Naive thymus-derived CD4-positive, alpha-beta T cell (primary cell): ENCODE measurements at regions of chr5 and their contacts with region 1.

Region 1: GRCh38 chr5:127492854-127493738 is 24.3 kb upstream of the PRRC1 start:
- DNase-seq: peak in 6 of 9 donors; percentile 24 to 63 (median 48)
- ATAC-seq: peak; percentile 71
- H3K4me3 ChIP-seq: no peak overlapping the region
- H3K4me3 Mint-ChIP-seq: no peak overlapping the region
- H3K27ac ChIP-seq: no peak overlapping the region
- H3K27ac Mint-ChIP-seq: no peak overlapping the region
- H3K4me1 ChIP-seq: no peaks in the 10 kb centered on the region
- H3K4me1 Mint-ChIP-seq: peaks cover 0 to 3% (median 0%) of the 10 kb centered on the region in 7 donors
- H3K27me3 ChIP-seq: no peaks in the 10 kb centered on the region
- H3K27me3 Mint-ChIP-seq: peaks cover 13 to 55% (median 29%) of the 10 kb centered on the region in 5 donors

Region 2: GRCh38 chr5:126339215-126339805 is 1153.8 kb before region 1 on chr5:
- CTCF ChIA-PET with region 1: no interaction called
- POLR2A ChIA-PET with region 1: no interaction called
- intact Hi-C with region 1: loop called (anchors 2 to 5 kb)
- DNase-seq: peak in 7 of 9 donors; percentile 48 to 68 (median 65)
- ATAC-seq: peak; percentile 74
- H3K4me3 ChIP-seq: no peak overlapping the region
- H3K4me3 Mint-ChIP-seq: no peak overlapping the region
- H3K27ac ChIP-seq: no peak overlapping the region
- H3K27ac Mint-ChIP-seq: no peak overlapping the region
- H3K4me1 ChIP-seq: no peaks in the 10 kb centered on the region
- H3K4me1 Mint-ChIP-seq: no peaks in the 10 kb centered on the region
- H3K27me3 ChIP-seq: no peaks in the 10 kb centered on the region
- H3K27me3 Mint-ChIP-seq: peaks cover 9 to 27% (median 20%) of the 10 kb centered on the region in 5 donors

Region 3: DNA sequence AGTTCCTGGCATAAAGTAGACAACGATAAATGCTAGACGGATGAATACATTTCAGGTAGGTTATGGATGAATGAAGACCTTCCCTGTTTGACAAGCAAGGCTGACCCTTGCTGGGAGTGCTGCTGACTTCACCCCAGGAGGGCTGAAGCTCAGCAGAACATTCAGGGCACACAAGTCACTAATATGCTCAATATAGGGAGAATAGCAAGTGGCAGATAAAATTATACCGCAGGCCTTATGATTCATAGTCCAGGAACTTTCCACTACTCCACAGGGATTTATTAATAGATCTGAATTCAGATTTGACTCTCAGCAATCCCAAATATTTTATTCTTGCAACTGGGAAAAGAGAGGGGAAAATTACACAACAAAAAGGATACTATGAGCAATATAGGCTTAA is 1108.1 kb before region 1 on chr5:
- CTCF ChIA-PET with region 1: no interaction called
- POLR2A ChIA-PET with region 1: no interaction called
- intact Hi-C with region 1: no loop called
- DNase-seq: no peak
- ATAC-seq: no peak
- H3K4me3 ChIP-seq: no peak overlapping the region
- H3K4me3 Mint-ChIP-seq: no peak overlapping the region
- H3K27ac ChIP-seq: no peak overlapping the region
- H3K27ac Mint-ChIP-seq: no peak overlapping the region
- H3K4me1 ChIP-seq: no peaks in the 10 kb centered on the region
- H3K4me1 Mint-ChIP-seq: no peaks in the 10 kb centered on the region
- H3K27me3 ChIP-seq: no peaks in the 10 kb centered on the region
- H3K27me3 Mint-ChIP-seq: peaks cover 0 to 8% (median 0%) of the 10 kb centered on the region in 5 donors

Region 4: DNA sequence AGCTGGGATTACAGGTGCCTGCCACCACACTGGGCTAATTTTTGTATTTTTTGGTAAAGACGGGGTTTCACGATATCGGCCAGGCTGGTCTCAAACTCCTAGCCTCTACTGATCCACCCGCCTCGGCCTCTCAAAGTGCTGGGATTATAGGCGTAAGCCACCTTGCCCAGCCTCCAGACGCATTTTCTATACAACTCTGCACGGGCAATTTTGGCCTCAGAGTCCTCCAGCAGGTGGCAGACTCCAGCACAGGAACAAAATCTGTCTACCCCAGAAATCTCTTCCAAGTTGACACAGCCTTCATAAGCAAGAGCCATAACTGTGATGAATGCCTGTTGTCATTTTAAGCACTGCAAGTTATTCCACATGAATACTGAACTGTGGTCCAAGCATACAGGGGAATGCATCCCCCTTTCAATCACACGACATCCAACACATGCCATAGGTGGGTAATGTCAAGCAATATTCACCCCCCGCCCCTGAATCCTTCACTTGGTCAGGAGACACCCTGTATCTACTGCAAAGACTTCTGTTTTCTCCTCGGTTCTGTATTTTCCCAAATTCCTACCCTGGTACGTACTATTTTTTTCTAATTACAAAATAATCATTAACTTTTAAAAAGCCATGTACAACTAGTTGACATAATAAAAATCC is 948.9 kb before region 1 on chr5:
- CTCF ChIA-PET with region 1: no interaction called
- POLR2A ChIA-PET with region 1: no interaction called
- intact Hi-C with region 1: loop called (anchors 1 to 2 kb)
- DNase-seq: peak in 5 of 9 donors; percentile 14 to 30 (median 28)
- ATAC-seq: peak; percentile 48
- H3K4me3 ChIP-seq: no peak overlapping the region
- H3K4me3 Mint-ChIP-seq: no peak overlapping the region
- H3K27ac ChIP-seq: no peak overlapping the region
- H3K27ac Mint-ChIP-seq: peak overlapping the region in 1 of 9 donors; percentile 12
- H3K4me1 ChIP-seq: no peaks in the 10 kb centered on the region
- H3K4me1 Mint-ChIP-seq: no peaks in the 10 kb centered on the region
- H3K27me3 ChIP-seq: no peaks in the 10 kb centered on the region
- H3K27me3 Mint-ChIP-seq: peaks cover 0 to 6% (median 0%) of the 10 kb centered on the region in 5 donors

Region 5: GRCh38 chr5:126676195-126676624 is 816.9 kb before region 1 on chr5:
- CTCF ChIA-PET with region 1: interaction called, 3 read pairs
- POLR2A ChIA-PET with region 1: no interaction called
- intact Hi-C with region 1: loop called in 1 of 2 experiments (anchors 1 kb)
- DNase-seq: peak; percentile 10 to 78 (median 68)
- ATAC-seq: peak; percentile 87
- H3K4me3 ChIP-seq: no peak overlapping the region
- H3K4me3 Mint-ChIP-seq: peak overlapping the region in 1 of 10 donors; percentile 43
- H3K27ac ChIP-seq: no peak overlapping the region
- H3K27ac Mint-ChIP-seq: peak overlapping the region in 4 of 9 donors; percentile 0 to 50 (median 1)
- H3K4me1 ChIP-seq: no peaks in the 10 kb centered on the region
- H3K4me1 Mint-ChIP-seq: peaks cover 4 to 19% (median 5%) of the 10 kb centered on the region in 7 donors
- H3K27me3 ChIP-seq: no peaks in the 10 kb centered on the region
- H3K27me3 Mint-ChIP-seq: no peaks in the 10 kb centered on the region

Region 6: DNA sequence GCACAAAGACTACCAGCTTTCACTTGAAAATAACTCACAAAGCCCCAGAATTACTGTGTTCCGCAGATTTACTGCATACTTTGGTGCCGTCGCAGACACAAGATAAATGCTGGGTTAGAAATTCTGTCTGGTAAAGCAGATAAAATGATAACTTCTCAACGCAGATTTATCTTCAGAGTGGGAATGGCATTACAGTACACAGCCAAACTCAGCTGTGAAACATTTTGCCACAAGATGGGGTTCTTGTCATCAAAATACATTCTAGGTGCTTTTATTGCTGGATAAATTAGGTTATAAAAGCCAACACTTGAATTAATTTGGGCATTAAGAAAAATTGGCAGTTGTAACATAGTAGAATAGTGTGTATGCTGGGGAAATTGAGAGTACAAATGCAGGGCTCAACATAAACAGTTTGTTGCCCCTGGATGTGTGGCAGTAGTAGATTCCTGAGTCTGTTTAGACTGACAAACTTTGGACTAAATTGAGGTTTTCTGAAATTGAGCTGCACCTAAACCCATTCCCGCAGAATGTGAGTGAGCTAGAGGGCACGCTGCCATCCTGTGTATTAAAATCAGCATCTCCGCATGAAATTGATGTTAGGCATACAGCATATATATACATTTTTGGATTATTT is 655.1 kb before region 1 on chr5:
- CTCF ChIA-PET with region 1: interaction called, 4 read pairs
- POLR2A ChIA-PET with region 1: no interaction called
- intact Hi-C with region 1: loop called in 1 of 2 experiments (anchors 1 kb)
- DNase-seq: peak in 5 of 9 donors; percentile 21 to 45 (median 31)
- ATAC-seq: peak; percentile 51
- H3K4me3 ChIP-seq: no peak overlapping the region
- H3K4me3 Mint-ChIP-seq: no peak overlapping the region
- H3K27ac ChIP-seq: no peak overlapping the region
- H3K27ac Mint-ChIP-seq: peak overlapping the region in 1 of 9 donors; percentile 30
- H3K4me1 ChIP-seq: no peaks in the 10 kb centered on the region
- H3K4me1 Mint-ChIP-seq: peaks cover 0 to 8% (median 0%) of the 10 kb centered on the region in 7 donors
- H3K27me3 ChIP-seq: no peaks in the 10 kb centered on the region
- H3K27me3 Mint-ChIP-seq: no peaks in the 10 kb centered on the region

Region 7: GRCh38 chr5:127313847-127314473 is 179.1 kb before region 1 on chr5:
- CTCF ChIA-PET with region 1: no interaction called
- POLR2A ChIA-PET with region 1: no interaction called
- intact Hi-C with region 1: loop called in 1 of 2 experiments (anchors 10 kb)
- DNase-seq: peak; percentile 12 to 68 (median 50)
- ATAC-seq: peak; percentile 81
- H3K4me3 ChIP-seq: no peak overlapping the region
- H3K4me3 Mint-ChIP-seq: peak overlapping the region in 1 of 10 donors; percentile 2
- H3K27ac ChIP-seq: no peak overlapping the region
- H3K27ac Mint-ChIP-seq: no peak overlapping the region
- H3K4me1 ChIP-seq: no peaks in the 10 kb centered on the region
- H3K4me1 Mint-ChIP-seq: peaks cover 0 to 7% (median 0%) of the 10 kb centered on the region in 7 donors
- H3K27me3 ChIP-seq: no peaks in the 10 kb centered on the region
- H3K27me3 Mint-ChIP-seq: peaks cover 0 to 32% (median 4%) of the 10 kb centered on the region in 5 donors